BJ (cell line): ENCODE measurements at regions of chrX and their contacts with region 1.

Region 1: GRCh38 chrX:54639346-54640102 is 109.5 kb downstream of the GNL3L start:
- DNase-seq: peak; percentile 89
- H3K4me3 ChIP-seq: peak overlapping the region; percentile 43
- H3K27me3 ChIP-seq: no peaks in the 10 kb centered on the region
- CTCF ChIP-seq: peak; percentile 76

Region 2: DNA sequence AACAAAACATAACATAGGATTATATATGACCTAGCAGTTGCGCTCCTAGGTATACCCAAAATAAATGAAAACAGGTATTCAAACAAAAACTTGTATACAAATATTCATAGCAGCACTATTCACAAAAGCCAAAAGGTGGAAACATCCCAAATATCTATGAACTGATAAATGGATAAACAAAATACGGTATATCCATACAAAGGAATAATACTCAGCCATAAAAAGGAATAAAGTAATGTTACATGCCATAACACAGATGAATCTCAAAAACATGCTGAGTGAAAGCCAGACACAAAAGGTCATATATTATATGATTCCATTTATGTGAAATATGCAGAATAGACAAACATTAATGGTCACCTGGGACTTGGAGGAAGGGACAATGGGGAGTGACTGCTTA is 286.8 kb before region 1 on chrX:
- CTCF ChIA-PET with region 1: no interaction called
- POLR2A ChIA-PET with region 1: no interaction called
- DNase-seq: no peak
- H3K4me3 ChIP-seq: no peak overlapping the region
- H3K27me3 ChIP-seq: peaks cover 3% of the 10 kb centered on the region
- CTCF ChIP-seq: no peak

Region 3: GRCh38 chrX:54615109-54615508 is 24.4 kb before region 1 on chrX:
- CTCF ChIA-PET with region 1: no interaction called
- POLR2A ChIA-PET with region 1: no interaction called
- DNase-seq: no peak
- H3K4me3 ChIP-seq: no peak overlapping the region
- H3K27me3 ChIP-seq: no peaks in the 10 kb centered on the region
- CTCF ChIP-seq: no peak

Region 4: GRCh38 chrX:54808605-54809483 is 169.3 kb after region 1 on chrX:
- CTCF ChIA-PET with region 1: no interaction called
- POLR2A ChIA-PET with region 1: interaction called, 13 read pairs
- DNase-seq: peak; percentile 81
- H3K4me3 ChIP-seq: peak overlapping the region; percentile 61
- H3K27me3 ChIP-seq: no peaks in the 10 kb centered on the region
- CTCF ChIP-seq: no peak